RWPE1 (cell line): ENCODE measurements at regions of chr6 and their contacts with region 1.

Region 1: GRCh38 chr6:166325383-166326042 is 16.8 kb downstream of the SFT2D1 start:
- DNase-seq: no peak
- H3K27ac ChIP-seq: no peak overlapping the region
- CTCF ChIP-seq: no peak

Region 2: DNA sequence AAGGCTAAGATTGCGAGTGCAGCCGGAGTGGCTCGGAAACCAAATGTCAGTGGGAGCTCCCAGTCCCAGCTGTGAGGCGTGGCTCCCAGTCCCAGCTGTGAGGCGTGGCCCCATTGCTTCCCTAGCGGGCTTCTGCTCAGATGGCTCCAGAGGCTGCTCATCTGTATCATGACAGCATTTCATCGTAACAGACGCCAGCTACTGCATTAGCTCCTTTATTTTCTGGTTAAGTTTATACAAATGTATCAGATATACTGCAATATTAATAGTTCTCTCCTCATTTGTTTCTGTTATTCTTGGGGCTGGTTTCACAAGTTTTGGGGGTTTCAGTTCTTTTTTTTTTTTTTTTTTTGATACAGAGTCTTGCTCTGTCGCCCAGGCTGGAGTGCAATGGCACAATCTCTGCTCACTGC is 123.2 kb before region 1 on chr6:
- CTCF ChIA-PET with region 1: no interaction called
- POLR2A ChIA-PET with region 1: no interaction called
- DNase-seq: no peak
- H3K27ac ChIP-seq: no peak overlapping the region
- CTCF ChIP-seq: no peak

Region 3: GRCh38 chr6:166387642-166388289 is 62.3 kb after region 1 on chr6:
- CTCF ChIA-PET with region 1: interaction called, 11 read pairs
- POLR2A ChIA-PET with region 1: no interaction called
- DNase-seq: no peak
- H3K27ac ChIP-seq: no peak overlapping the region
- CTCF ChIP-seq: no peak